A549 (cell line): ENCODE measurements at regions of chr19 and their contacts with region 1.

Region 1: DNA sequence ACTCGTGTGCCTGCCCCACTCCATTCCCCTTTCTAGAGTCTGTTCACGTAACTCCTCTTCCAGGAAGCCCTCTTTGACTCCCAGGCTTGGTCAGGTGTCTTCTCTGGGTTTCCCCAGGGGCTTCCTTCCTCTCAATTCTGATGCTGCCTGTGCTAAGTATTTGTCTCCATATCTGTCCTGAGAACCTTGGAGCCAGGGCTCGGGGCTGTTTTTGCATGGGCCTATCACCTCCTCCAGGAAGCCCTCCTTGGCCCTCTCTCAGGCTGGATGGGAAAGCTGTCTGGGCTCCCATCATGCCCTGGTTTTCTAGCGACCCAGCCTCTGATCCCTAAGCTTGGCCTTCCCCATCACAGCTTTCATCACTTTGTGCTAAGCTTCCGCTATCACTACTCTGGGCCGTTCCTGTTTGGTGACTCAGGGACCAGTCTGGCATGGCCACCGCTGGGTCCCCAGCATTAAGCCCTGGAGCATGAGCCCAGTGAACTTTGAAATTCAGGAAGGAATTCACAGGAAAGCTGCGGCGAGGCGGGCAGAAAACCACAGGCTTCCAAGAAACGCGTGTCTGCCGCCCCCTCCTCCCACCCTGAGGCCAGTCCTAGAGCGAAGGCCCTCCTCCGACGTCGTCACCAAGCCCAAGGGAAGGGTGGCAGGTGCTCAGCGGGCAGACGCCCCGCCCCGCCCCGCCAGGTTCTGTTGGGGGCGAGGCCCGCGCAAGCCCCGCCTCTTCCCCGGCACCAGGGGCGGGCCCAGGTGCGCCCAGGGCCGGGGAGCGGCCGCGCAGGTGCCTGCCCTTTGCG is 486 bp upstream of the SPINT2 start:
- DNase-seq: peak; percentile 78 to 87
- ATAC-seq: peak; percentile 64 to 66
- H3K4me3 ChIP-seq: peak overlapping the region; percentile 67
- H3K27ac ChIP-seq: peak overlapping the region; percentile 89 to 91
- H3K4me1 ChIP-seq: peaks cover 51% of the 10 kb centered on the region
- CTCF ChIP-seq: no peak
- EP300 ChIP-seq: no peak; a peak in 1 of 5 replicates
- POLR2A ChIP-seq: no peak
- RAD21 ChIP-seq: no peak; a peak in 1 of 5 replicates

Region 2: GRCh38 chr19:38216785-38217641 is 46.9 kb before region 1 on chr19:
- CTCF ChIA-PET with region 1: no interaction called
- POLR2A ChIA-PET with region 1: no interaction called
- DNase-seq: no peak
- ATAC-seq: 0 out of 6 replicates have a peak, but pooled peaks of 1 of the 2 experiments have one; percentile 1
- H3K4me3 ChIP-seq: no peak overlapping the region
- H3K27ac ChIP-seq: no peak overlapping the region
- H3K4me1 ChIP-seq: peaks cover 3% of the 10 kb centered on the region; the same call in 1 of the 3 replicates
- CTCF ChIP-seq: no peak
- EP300 ChIP-seq: no peak
- POLR2A ChIP-seq: no peak
- RAD21 ChIP-seq: no peak

Region 3: DNA sequence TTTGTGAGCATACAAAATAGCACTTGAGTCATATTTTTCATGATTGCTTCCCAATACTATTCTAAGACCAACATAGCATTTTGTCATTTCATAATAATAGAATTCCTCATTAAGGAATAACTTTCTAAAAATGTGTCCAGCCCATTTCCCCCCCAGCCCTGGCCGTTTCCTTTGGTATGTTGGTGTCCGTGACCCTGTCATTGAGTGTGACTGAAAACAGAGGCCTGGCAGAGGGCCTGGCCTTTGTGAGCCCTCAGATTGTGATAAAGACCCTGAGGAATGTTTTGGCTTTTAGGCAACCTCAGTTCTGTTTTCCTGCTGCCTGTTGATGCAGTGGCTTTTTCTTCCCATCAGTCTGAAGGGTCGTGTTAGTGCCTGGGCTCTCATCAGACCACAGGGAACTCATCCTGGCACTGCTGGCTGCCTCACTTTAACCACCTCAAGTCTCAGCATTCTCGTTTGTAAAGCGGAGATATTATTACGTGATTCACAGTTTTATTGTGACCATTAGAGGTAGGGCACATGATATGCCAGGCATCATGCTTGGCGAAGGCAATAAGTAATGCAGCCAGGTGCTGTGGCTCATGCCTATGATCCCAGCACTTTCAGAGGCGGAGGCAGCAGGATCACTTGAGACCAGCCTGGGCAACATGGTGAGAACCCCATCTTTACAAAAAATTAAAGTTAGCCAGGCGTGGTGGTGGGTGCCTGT is 14.2 kb after region 1 on chr19:
- CTCF ChIA-PET with region 1: interaction called, 259 read pairs
- POLR2A ChIA-PET with region 1: interaction called, 5 read pairs
- DNase-seq: no peak
- ATAC-seq: no peak; a peak in 1 of 6 replicates
- H3K4me3 ChIP-seq: no peak overlapping the region
- H3K27ac ChIP-seq: peak overlapping the region in 1 of 2 experiments; percentile 25; a peak in 2 of 6 replicates
- H3K4me1 ChIP-seq: peaks cover 34% of the 10 kb centered on the region
- CTCF ChIP-seq: no peak
- EP300 ChIP-seq: no peak
- POLR2A ChIP-seq: no peak
- RAD21 ChIP-seq: no peak

Region 4: GRCh38 chr19:38290631-38291157 is 26.8 kb after region 1 on chr19:
- CTCF ChIA-PET with region 1: interaction called, 259 read pairs
- POLR2A ChIA-PET with region 1: interaction called, 7 read pairs
- DNase-seq: peak in 1 of 2 experiments; percentile 61
- ATAC-seq: peak; percentile 42 to 58
- H3K4me3 ChIP-seq: no peak overlapping the region
- H3K27ac ChIP-seq: peak overlapping the region; percentile 9 to 62; a peak in 3 of 6 replicates
- H3K4me1 ChIP-seq: peaks cover 16% of the 10 kb centered on the region
- CTCF ChIP-seq: no peak
- EP300 ChIP-seq: no peak
- POLR2A ChIP-seq: no peak
- RAD21 ChIP-seq: no peak

Region 5: GRCh38 chr19:38315657-38316476 is 52.0 kb after region 1 on chr19 and contains the start of gene YIF1B:
- CTCF ChIA-PET with region 1: interaction called, 1,052 read pairs
- POLR2A ChIA-PET with region 1: interaction called, 12 read pairs
- DNase-seq: peak; percentile 100
- ATAC-seq: peak; percentile 87 to 93
- H3K4me3 ChIP-seq: peak within 1 kb of the TSS; percentile 62
- H3K27ac ChIP-seq: peak within 1 kb of the TSS; percentile 76 to 85
- H3K4me1 ChIP-seq: peaks cover 10% of the 10 kb centered on the region; the same call in 2 of the 3 replicates
- CTCF ChIP-seq: no peak
- EP300 ChIP-seq: no peak
- POLR2A ChIP-seq: peak; percentile 63
- RAD21 ChIP-seq: no peak; a peak in 2 of 5 replicates
- polyA plus RNA-seq, gene YIF1B: 75.5 and 88.1 TPM in 2 replicates

Region 6: GRCh38 chr19:39187559-39187957 is 923.7 kb after region 1 on chr19:
- CTCF ChIA-PET with region 1: no interaction called
- POLR2A ChIA-PET with region 1: no interaction called
- DNase-seq: no peak
- ATAC-seq: peak; percentile 35 to 45
- H3K4me3 ChIP-seq: no peak overlapping the region
- H3K27ac ChIP-seq: peak overlapping the region in 1 of 2 experiments; percentile 31; a peak in 3 of 6 replicates
- H3K4me1 ChIP-seq: peaks cover 11% of the 10 kb centered on the region; the same call in 2 of the 3 replicates
- CTCF ChIP-seq: peak; percentile 21; the same call in 2 of the 3 replicates
- EP300 ChIP-seq: no peak
- POLR2A ChIP-seq: peak; percentile 9; the same call in 1 of the 2 replicates
- RAD21 ChIP-seq: no peak; a peak in 1 of 5 replicates